ENCODE measurements at regions of chr14 and their contacts with region 1.

Region 1: GRCh38 chr14:24299255-24300195 is at the starts of genes DHRS1 and NOP9:
- DNase-seq: peak; percentile 96
- CTCF ChIP-seq: no peak

Region 2: DNA sequence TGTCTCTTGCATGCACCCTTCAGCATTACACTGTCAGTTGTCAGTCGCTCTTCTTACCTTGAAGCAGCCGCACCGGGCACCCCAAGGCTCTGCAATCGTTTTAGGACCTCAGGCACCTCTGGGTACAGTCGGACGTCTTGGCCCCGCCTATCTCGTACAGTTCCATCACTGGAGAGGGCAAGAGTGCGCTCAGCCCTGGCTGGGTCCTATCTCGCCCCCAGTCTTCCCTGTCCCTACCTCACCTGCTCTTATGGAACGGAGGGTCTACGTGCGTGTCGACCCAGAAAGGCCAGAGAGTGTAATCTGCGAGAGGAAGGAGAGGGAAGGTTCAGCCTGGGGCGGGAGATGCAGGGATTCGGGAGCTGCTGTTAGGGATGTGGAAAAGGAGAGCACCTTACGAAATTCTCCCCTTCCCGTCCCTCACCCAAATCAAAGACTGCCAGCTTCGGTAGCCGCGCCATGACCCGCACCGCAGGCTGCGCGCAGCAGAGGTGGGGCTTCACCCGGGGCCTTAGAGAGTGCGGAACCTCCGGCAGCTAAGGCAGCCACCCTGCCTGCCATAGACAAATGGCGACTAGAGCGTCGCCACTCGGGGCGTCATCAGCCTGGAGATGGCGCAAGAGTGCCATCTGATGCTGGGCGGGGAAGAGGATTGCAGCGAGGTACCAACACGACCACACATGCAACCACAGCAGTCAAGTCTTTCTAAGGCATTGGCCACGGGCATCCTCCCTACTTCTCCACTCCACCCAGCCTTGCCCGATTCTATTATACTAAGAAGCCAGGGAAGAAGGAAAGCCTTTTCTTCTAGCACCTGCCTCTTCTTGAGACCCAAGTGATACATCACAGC is 83.8 kb before region 1 on chr14 and contains the start of gene MDP1:
- CTCF ChIA-PET with region 1: interaction called, 38 read pairs
- POLR2A ChIA-PET with region 1: no interaction called
- DNase-seq: peak; percentile 91
- CTCF ChIP-seq: peak; percentile 97

Region 3: DNA sequence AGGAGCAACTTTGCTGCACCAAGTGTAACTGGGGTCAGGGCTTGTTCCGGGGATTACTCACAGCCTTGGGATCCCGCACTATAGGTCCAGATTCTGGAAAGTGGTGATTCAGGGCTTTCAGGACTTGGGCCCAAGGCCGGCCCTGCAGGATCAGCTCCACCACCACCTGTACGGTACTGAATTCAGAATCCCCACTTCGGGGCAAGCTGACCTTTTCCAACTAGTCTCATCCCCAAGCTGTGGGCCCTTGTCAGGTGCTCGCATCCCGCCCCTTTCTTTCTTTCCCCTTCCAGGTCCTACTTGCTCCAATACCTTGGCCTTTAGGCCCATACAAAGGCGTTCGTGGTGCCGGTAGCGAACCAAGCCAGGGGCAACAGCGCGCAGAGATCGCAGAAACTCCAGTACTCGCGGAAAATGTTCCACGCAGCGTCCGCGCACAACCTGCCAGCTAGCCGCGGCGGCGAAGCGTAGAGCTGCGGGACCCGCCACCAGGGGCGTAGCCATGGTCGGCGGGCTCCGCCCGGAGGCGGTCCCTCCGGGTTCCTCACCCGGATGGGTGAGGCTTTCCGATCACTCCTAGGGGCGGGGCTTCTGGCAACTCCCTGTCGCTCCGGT is 57.6 kb before region 1 on chr14:
- CTCF ChIA-PET with region 1: interaction called, 323 read pairs
- POLR2A ChIA-PET with region 1: interaction called, 4 read pairs
- DNase-seq: peak; percentile 97
- CTCF ChIP-seq: peak; percentile 11

Region 4: GRCh38 chr14:24259252-24259995 is 40.1 kb before region 1 on chr14:
- CTCF ChIA-PET with region 1: interaction called, 13 read pairs
- POLR2A ChIA-PET with region 1: no interaction called
- DNase-seq: no peak
- CTCF ChIP-seq: no peak

Region 5: DNA sequence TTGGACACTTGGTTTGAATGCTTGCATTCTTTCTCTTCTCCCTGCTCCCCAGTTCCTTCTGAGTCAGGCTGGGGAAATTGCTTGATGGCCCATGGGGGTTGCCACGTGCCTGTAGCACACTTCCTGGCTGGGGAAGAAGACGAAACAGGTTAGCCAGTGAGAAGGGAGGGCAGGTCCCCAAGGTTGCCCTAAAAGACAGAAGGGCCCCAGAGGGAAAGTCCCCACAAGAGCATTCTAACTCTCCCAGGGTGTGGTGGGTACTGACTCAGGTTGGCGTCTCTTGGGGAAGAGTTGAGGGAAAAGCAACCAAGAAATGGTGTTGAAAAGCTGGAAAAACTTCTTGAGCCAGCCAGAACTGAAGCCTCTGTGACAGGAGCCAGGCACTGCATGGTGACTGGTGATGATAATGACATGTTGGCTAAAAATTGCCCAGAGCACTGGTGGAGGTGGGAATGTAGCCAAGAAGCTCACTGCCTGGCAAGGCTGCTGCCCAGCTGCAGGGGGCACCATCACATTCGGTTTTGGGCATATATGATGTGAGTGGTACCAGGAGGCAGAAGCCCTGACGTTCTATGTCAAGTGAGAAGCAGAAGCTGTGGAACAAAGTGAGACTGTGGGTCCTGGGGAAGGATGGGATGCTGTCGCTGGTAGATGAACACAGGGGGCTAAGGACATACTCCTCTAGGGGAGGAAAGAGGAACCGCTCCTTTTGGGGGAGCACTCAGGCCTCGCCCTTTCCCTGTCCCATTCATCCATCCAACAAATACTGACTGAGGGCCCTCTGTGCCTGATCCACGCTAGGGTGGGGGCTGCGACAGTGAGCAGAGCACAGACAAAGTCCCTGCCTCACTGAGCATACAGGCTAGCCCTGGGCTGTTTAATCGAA is 20.0 kb before region 1 on chr14:
- CTCF ChIA-PET with region 1: interaction called, 121 read pairs
- POLR2A ChIA-PET with region 1: interaction called, 9 read pairs
- DNase-seq: peak; percentile 50
- CTCF ChIP-seq: peak; percentile 11

Measured in GM10248 (cell line).